Naive thymus-derived CD4-positive, alpha-beta T cell (primary cell): ENCODE measurements at regions of chr10 and their contacts with region 1.

Region 1: DNA sequence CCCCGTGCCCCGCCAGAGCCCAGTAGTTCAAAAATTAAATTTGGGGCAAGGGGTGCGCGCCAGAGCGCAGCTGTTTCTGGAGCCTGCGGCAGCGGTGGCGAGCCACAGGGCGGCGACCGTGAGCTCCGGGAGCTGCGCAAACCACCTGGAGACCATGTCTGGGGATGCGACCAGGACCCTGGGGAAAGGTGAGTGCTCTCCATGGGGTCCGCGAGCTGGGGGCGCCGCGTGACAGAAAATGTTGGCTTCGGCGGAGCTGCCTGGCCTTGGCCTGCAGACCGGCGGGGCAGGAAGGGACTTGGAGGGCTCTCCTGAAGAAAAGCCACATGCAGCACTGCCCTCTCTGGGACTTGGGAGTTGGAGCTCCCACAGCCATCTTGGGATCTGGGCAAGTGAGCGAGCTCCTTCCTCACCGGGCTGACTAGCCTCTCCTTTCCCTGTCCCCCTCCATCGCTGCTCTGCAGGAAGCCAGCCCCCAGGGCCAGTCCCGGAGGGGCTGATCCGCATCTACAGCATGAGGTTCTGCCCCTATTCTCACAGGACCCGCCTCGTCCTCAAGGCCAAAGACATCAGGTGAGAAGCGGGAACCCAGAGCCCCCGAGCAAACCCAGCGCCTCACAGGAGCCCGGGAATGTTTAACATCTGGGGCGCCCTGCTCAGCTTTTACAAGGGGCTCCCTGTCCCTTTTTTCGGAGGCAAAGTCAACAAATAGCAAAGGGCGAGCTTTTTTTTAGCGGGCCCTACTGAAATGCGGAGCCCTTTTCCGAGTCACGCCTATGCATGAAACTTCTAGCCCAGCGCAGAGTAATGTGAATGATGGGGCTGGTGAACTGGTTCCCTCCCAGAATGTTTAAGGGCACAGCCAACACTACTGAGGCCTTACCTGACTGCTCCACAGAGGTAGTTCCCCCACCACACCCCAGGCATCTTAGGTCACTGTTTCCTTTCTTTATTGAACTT is 6.1 kb downstream of the GSTO2 start:
- DNase-seq: peak in 6 of 9 donors; percentile 35 to 60 (median 44)
- ATAC-seq: peak; percentile 90
- H3K4me3 ChIP-seq: peak overlapping the region; percentile 44
- H3K4me3 Mint-ChIP-seq: peak overlapping the region in 8 of 10 donors; percentile 18 to 70 (median 40)
- H3K27ac ChIP-seq: no peak overlapping the region
- H3K27ac Mint-ChIP-seq: no peak overlapping the region
- H3K4me1 ChIP-seq: peaks cover 3 to 7% of the 10 kb centered on the region in 2 donors
- H3K4me1 Mint-ChIP-seq: peaks cover 0 to 5% (median 0%) of the 10 kb centered on the region in 7 donors
- H3K27me3 ChIP-seq: no peaks in the 10 kb centered on the region
- H3K27me3 Mint-ChIP-seq: peaks cover 0 to 22% (median 4%) of the 10 kb centered on the region in 5 donors

Region 2: GRCh38 chr10:104254493-104255310 is 20.3 kb before region 1 on chr10 and contains the start of gene GSTO1:
- CTCF ChIA-PET with region 1: interaction called, 7 read pairs
- POLR2A ChIA-PET with region 1: interaction called, 68 read pairs
- intact Hi-C with region 1: no loop called
- DNase-seq: peak; percentile 28 to 59 (median 35)
- ATAC-seq: peak; percentile 71
- H3K4me3 ChIP-seq: peak within 1 kb of the TSS; percentile 83
- H3K4me3 Mint-ChIP-seq: peak within 1 kb of the TSS; percentile 84 to 100 (median 96)
- H3K27ac ChIP-seq: peak within 1 kb of the TSS; percentile 89
- H3K27ac Mint-ChIP-seq: peak within 1 kb of the TSS; percentile 85 to 97 (median 96)
- H3K4me1 ChIP-seq: peaks cover 9 to 23% of the 10 kb centered on the region in 2 donors
- H3K4me1 Mint-ChIP-seq: peaks cover 33 to 56% (median 48%) of the 10 kb centered on the region in 7 donors
- H3K27me3 ChIP-seq: no peaks in the 10 kb centered on the region
- H3K27me3 Mint-ChIP-seq: peaks cover 0 to 19% (median 0%) of the 10 kb centered on the region in 5 donors
- total RNA-seq, gene GSTO1: 28.1 to 129 (median 49.1) TPM

Region 3: GRCh38 chr10:104260775-104261115 is 14.3 kb before region 1 on chr10:
- CTCF ChIA-PET with region 1: interaction called, 14 read pairs
- POLR2A ChIA-PET with region 1: interaction called, 68 read pairs
- intact Hi-C with region 1: no loop called
- DNase-seq: no peak
- ATAC-seq: peak; percentile 52
- H3K4me3 ChIP-seq: no peak overlapping the region
- H3K4me3 Mint-ChIP-seq: peak overlapping the region in 8 of 10 donors; percentile 6 to 75 (median 50)
- H3K27ac ChIP-seq: peak overlapping the region; percentile 53
- H3K27ac Mint-ChIP-seq: peak overlapping the region; percentile 2 to 94 (median 83)
- H3K4me1 ChIP-seq: peaks cover 28 to 44% of the 10 kb centered on the region in 2 donors
- H3K4me1 Mint-ChIP-seq: peaks cover 46 to 96% (median 82%) of the 10 kb centered on the region in 7 donors
- H3K27me3 ChIP-seq: no peaks in the 10 kb centered on the region
- H3K27me3 Mint-ChIP-seq: no peaks in the 10 kb centered on the region

Region 4: DNA sequence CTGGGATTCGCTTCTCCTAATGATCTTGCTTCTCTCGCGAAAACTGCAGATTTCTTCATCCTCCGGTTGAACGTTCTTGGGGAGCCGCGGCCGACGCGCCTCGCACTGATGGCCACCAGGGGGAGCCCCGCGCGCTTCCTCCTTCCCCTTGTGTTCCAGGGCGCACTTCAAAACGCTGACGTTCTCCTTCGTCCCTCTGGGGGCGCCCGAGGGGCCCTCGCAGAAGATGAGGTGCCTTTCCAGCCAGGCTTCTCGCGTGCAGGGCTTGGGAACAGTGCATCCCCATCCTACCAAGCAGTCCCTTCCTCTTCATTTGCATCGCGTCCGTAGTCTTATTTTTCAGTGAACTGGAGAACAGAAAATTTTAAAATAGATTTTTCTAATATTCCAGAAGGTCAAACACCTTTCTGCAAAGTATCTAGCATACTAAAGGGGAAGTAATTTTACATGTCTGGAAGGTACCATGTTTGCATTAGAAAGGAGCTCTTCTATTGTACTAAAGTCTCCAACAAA is 16.5 kb after region 1 on chr10:
- CTCF ChIA-PET with region 1: interaction called, 49 read pairs
- POLR2A ChIA-PET with region 1: interaction called, 3 read pairs
- intact Hi-C with region 1: no loop called
- DNase-seq: peak; percentile 77 to 89 (median 86)
- ATAC-seq: peak; percentile 100
- H3K4me3 ChIP-seq: no peak overlapping the region
- H3K4me3 Mint-ChIP-seq: peak overlapping the region in 4 of 10 donors; percentile 0 to 64 (median 26)
- H3K27ac ChIP-seq: no peak overlapping the region
- H3K27ac Mint-ChIP-seq: peak overlapping the region in 5 of 9 donors; percentile 1 to 81 (median 20)
- H3K4me1 ChIP-seq: peaks cover 0 to 9% of the 10 kb centered on the region in 2 donors
- H3K4me1 Mint-ChIP-seq: peaks cover 2 to 11% (median 6%) of the 10 kb centered on the region in 7 donors
- H3K27me3 ChIP-seq: peaks cover 0 to 5% of the 10 kb centered on the region in 2 donors
- H3K27me3 Mint-ChIP-seq: peaks cover 3 to 45% (median 10%) of the 10 kb centered on the region in 5 donors

Region 5: GRCh38 chr10:104300736-104301292 is 25.8 kb after region 1 on chr10:
- CTCF ChIA-PET with region 1: interaction called, 16 read pairs
- POLR2A ChIA-PET with region 1: interaction called, 3 read pairs
- intact Hi-C with region 1: no loop called
- DNase-seq: peak in 4 of 9 donors; percentile 42 to 52 (median 46)
- ATAC-seq: no peak
- H3K4me3 ChIP-seq: no peak overlapping the region
- H3K4me3 Mint-ChIP-seq: peak overlapping the region; percentile 31 to 78 (median 70)
- H3K27ac ChIP-seq: no peak overlapping the region
- H3K27ac Mint-ChIP-seq: peak overlapping the region; percentile 60 to 97 (median 89)
- H3K4me1 ChIP-seq: peaks cover 19 to 29% of the 10 kb centered on the region in 2 donors
- H3K4me1 Mint-ChIP-seq: peaks cover 27 to 61% (median 48%) of the 10 kb centered on the region in 7 donors
- H3K27me3 ChIP-seq: no peaks in the 10 kb centered on the region
- H3K27me3 Mint-ChIP-seq: no peaks in the 10 kb centered on the region

Region 6: GRCh38 chr10:104435822-104436221 is 160.8 kb after region 1 on chr10:
- CTCF ChIA-PET with region 1: no interaction called
- POLR2A ChIA-PET with region 1: no interaction called
- intact Hi-C with region 1: no loop called
- DNase-seq: no peak
- ATAC-seq: no peak
- H3K4me3 ChIP-seq: no peak overlapping the region
- H3K4me3 Mint-ChIP-seq: no peak overlapping the region
- H3K27ac ChIP-seq: no peak overlapping the region
- H3K27ac Mint-ChIP-seq: no peak overlapping the region
- H3K4me1 ChIP-seq: no peaks in the 10 kb centered on the region
- H3K4me1 Mint-ChIP-seq: no peaks in the 10 kb centered on the region
- H3K27me3 ChIP-seq: no peaks in the 10 kb centered on the region
- H3K27me3 Mint-ChIP-seq: peaks cover 5 to 22% (median 14%) of the 10 kb centered on the region in 5 donors

Region 7: DNA sequence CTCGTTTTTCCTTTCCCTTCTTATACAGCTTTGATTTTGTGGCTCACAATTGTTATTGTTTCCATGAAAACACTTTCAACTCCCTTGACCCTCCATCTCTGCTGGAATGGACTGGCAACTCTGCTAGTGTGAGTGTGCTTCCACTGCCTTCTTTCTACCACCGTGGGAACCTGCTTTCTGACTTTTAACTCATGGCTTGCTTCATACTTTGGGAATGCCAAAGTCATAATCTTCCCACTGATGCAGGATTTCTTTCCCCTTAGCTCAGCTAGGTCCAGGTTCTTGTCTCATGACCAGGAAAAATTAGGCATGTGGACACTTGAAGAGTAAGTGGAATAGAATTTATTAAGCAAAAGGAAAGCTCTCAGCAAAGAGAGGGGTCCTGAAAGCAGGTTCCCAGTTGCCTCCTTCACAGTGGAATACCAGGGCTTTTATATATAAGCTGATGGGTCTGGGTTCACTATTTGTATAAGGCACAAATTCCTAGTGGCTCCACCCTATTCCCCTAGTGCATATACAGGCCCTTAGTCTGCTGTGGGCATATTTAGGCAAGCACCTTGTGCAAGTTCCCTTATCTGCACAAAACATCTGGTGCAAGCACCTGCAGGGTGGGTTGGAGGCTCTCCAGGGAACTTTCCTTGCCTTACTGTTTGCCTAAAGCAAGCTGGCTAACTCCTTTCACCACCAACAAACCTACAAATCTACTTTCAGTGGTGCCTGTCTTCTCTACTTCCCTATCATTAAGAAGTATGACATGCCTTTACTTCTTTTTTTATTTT is 198.1 kb after region 1 on chr10:
- CTCF ChIA-PET with region 1: no interaction called
- POLR2A ChIA-PET with region 1: no interaction called
- intact Hi-C with region 1: no loop called
- DNase-seq: no peak
- ATAC-seq: no peak
- H3K4me3 ChIP-seq: no peak overlapping the region
- H3K4me3 Mint-ChIP-seq: no peak overlapping the region
- H3K27ac ChIP-seq: no peak overlapping the region
- H3K27ac Mint-ChIP-seq: no peak overlapping the region
- H3K4me1 ChIP-seq: no peaks in the 10 kb centered on the region
- H3K4me1 Mint-ChIP-seq: peaks cover 0 to 2% (median 0%) of the 10 kb centered on the region in 7 donors
- H3K27me3 ChIP-seq: no peaks in the 10 kb centered on the region
- H3K27me3 Mint-ChIP-seq: peaks cover 16 to 34% (median 21%) of the 10 kb centered on the region in 5 donors